ENCODE measurements at regions of chr19 and their contacts with region 1.

Region 1: GRCh38 chr19:33430674-33431277 is 57.3 kb downstream of the CEBPG start:
- DNase-seq: peak; percentile 59 to 71 (median 70)
- ATAC-seq: peak; percentile 66 to 86 (median 82)
- H3K4me3 ChIP-seq: no peak overlapping the region
- H3K27ac ChIP-seq: no peak overlapping the region
- H3K4me1 ChIP-seq: no peaks in the 10 kb centered on the region
- H3K27me3 ChIP-seq: no peaks in the 10 kb centered on the region
- CTCF ChIP-seq: peak; percentile 49 to 73 (median 62)
- POLR2A ChIP-seq: no peak

Region 2: DNA sequence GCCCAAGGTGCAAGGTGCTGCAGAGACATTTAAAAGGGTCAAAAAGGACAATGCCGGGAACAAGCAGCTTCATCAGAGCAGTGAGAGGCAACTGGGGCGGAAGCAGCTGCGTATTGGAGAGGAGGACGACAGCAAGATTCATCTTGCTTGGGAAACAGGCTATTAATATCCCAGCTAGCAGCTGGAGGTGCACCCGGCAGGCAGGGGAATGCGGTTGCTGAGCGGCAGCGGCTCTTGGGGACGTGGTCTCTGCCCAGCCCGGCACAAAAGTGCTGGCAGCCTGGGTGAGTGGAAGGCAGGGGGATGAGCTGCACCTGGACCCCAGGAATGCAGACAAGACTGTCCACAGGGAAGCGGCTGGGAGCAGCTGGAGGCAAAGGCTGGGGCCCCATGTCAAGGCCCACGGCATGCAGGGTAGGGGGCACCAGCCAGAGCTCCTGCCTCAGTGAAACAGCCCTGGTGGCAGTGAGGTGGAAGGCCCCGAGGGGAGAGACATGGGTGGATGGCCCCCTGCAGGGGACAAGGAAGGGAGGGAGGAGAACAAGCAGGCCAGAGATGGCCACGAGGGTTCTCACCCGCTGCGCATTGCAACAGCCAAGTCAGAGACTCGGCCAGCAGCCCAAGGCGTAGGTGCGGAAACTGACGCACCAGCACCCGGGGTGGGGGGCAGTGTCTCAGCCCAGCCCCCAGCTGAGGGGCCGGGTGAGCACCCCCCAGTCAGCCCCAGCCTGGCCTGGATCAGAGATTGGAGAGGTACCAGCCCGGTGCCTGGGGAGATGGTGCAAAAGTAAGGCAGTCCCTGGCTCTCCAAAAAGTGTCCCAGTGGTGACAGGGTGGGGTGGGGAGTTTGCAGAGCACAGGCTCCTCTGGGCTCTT is 56.4 kb after region 1 on chr19:
- intact Hi-C with region 1: no loop called
- DNase-seq: peak in 2 of 3 donors; percentile 34 to 37
- ATAC-seq: peak in 2 of 4 donors; percentile 10 to 16
- H3K4me3 ChIP-seq: no peak overlapping the region
- H3K27ac ChIP-seq: no peak overlapping the region
- H3K4me1 ChIP-seq: no peaks in the 10 kb centered on the region
- H3K27me3 ChIP-seq: no peaks in the 10 kb centered on the region
- CTCF ChIP-seq: no peak
- POLR2A ChIP-seq: no peak

Region 3: DNA sequence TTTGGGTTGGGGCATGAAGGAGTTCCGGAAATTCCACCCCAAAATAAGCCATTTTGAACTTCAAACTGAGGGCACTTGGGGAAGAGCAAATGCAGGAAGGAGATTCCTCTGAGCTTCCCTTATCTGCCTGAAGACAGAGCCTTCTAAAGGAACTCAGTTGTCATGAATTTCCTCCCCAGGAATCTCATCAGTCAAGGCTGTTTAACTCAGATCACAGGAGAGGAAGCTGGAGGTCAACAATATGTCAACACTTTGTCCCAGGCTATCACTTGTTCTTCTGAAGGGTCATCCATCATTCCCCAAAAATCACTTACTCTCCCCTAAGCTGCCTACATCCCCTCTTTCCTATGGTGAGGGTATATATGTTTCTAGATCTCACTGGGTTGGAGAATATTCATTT is 165.0 kb after region 1 on chr19:
- intact Hi-C with region 1: no loop called
- DNase-seq: no peak
- ATAC-seq: no peak
- H3K4me3 ChIP-seq: no peak overlapping the region
- H3K27ac ChIP-seq: no peak overlapping the region
- H3K4me1 ChIP-seq: no peaks in the 10 kb centered on the region
- H3K27me3 ChIP-seq: no peaks in the 10 kb centered on the region
- CTCF ChIP-seq: no peak
- POLR2A ChIP-seq: no peak

Region 4: DNA sequence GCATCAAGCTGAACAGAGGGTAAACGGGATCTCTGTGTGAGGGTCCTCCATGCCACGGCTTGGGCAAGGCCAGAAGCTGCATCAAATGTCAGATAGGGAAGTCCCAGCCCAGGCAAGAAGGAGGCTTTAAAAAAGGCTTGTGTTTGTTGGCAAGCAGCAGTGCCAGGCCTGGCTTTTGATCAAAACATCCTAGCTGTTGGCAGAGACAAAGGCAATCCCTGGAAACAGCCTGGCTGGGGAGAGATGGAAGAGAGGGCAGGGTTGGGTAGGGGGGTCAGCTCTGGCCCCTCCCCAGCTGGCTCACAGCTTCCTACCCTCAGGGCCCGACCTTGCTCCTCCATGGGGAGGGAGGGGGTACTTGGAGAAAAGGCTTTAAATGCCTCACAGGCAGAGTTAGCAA is 304.1 kb after region 1 on chr19:
- intact Hi-C with region 1: no loop called
- DNase-seq: peak in 1 of 3 donors; percentile 56
- ATAC-seq: peak in 2 of 4 donors; percentile 20 to 58
- H3K4me3 ChIP-seq: no peak overlapping the region
- H3K27ac ChIP-seq: no peak overlapping the region
- H3K4me1 ChIP-seq: no peaks in the 10 kb centered on the region
- H3K27me3 ChIP-seq: no peaks in the 10 kb centered on the region
- CTCF ChIP-seq: no peak
- POLR2A ChIP-seq: no peak

Region 5: GRCh38 chr19:33771384-33772101 is 340.8 kb after region 1 on chr19:
- intact Hi-C with region 1: loop called (anchors 5 kb)
- DNase-seq: peak; percentile 79 to 80 (median 79)
- ATAC-seq: peak; percentile 79 to 94 (median 90)
- H3K4me3 ChIP-seq: no peak overlapping the region
- H3K27ac ChIP-seq: no peak overlapping the region
- H3K4me1 ChIP-seq: no peaks in the 10 kb centered on the region
- H3K27me3 ChIP-seq: no peaks in the 10 kb centered on the region
- CTCF ChIP-seq: peak; percentile 89 to 91 (median 90)
- POLR2A ChIP-seq: no peak